SK-N-SH (cell line): ENCODE measurements at regions of chr1 and their contacts with region 1.

Region 1: GRCh38 chr1:203486618-203487370 is 7.2 kb upstream of the OPTC start:
- DNase-seq: no peak
- H3K4me3 ChIP-seq: no peak overlapping the region; a peak in 1 of 4 replicates
- H3K27ac ChIP-seq: peak overlapping the region in 1 of 2 experiments; percentile 83; a peak in 2 of 4 replicates
- H3K4me1 ChIP-seq: peaks cover 0 to 11% of the 10 kb centered on the region in 2 experiments; a peak in 1 of 4 replicates
- H3K27me3 ChIP-seq: no peaks in the 10 kb centered on the region
- CTCF ChIP-seq: no peak
- EP300 ChIP-seq: no peak
- RAD21 ChIP-seq: no peak

Region 2: DNA sequence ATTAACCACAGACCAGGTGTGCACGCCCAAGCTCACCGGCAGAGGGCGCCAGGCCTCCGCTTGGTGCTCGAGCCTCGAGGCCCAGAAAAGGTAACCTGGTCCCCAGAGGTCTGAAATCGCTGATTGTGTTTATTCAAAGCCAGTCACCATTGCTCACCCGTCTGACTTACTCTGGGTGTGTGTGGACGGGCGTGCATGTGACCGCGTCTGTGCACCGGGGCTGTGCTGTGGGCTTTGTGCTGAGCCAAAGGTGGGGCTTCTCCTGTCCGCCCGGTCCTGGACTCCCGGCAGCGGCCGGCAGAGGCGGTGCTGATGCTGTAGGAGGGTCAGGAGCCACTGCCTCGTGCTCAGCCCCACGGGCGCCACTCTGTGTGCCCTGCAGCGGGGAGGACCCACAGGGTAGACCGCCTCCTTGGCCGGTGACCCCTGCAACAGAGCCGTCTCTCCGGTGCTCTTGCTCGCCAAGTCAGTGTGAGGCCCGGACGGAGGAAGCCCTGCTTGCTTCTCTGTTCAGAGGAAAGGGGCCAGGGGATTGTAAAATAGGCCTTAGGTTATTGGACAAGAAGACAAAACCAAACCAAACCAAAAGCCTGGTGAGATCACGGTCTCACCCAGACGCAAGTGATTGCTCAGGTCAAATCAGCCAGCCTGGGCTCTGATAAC is 213.5 kb before region 1 on chr1:
- CTCF ChIA-PET with region 1: interaction called, 34 read pairs
- POLR2A ChIA-PET with region 1: no interaction called
- DNase-seq: peak; percentile 86
- H3K4me3 ChIP-seq: peak overlapping the region in 1 of 2 experiments; percentile 31; a peak in 1 of 4 replicates
- H3K27ac ChIP-seq: no peak overlapping the region
- H3K4me1 ChIP-seq: peaks cover 0 to 28% of the 10 kb centered on the region in 2 experiments; a peak in 1 of 4 replicates
- H3K27me3 ChIP-seq: no peaks in the 10 kb centered on the region
- CTCF ChIP-seq: peak; percentile 98
- EP300 ChIP-seq: no peak
- RAD21 ChIP-seq: peak; percentile 93

Region 3: GRCh38 chr1:203440771-203441170 is 46.0 kb before region 1 on chr1:
- CTCF ChIA-PET with region 1: interaction called, 17 read pairs
- POLR2A ChIA-PET with region 1: no interaction called
- DNase-seq: peak; percentile 61
- H3K4me3 ChIP-seq: no peak overlapping the region
- H3K27ac ChIP-seq: no peak overlapping the region
- H3K4me1 ChIP-seq: peaks cover 6 to 14% of the 10 kb centered on the region in 2 experiments; a peak in 2 of 4 replicates
- H3K27me3 ChIP-seq: no peaks in the 10 kb centered on the region
- CTCF ChIP-seq: peak; percentile 68
- EP300 ChIP-seq: no peak
- RAD21 ChIP-seq: peak; percentile 82

Region 4: GRCh38 chr1:203475012-203475981 is 11.5 kb before region 1 on chr1 and contains the start of gene PRELP:
- CTCF ChIA-PET with region 1: interaction called, 19 read pairs
- POLR2A ChIA-PET with region 1: interaction called, 3 read pairs
- DNase-seq: peak; percentile 67
- H3K4me3 ChIP-seq: no peak within 1 kb of the TSS
- H3K27ac ChIP-seq: no peak within 1 kb of the TSS
- H3K4me1 ChIP-seq: peaks cover 7 to 8% of the 10 kb centered on the region in 2 experiments; a peak in 2 of 4 replicates
- H3K27me3 ChIP-seq: no peaks in the 10 kb centered on the region
- CTCF ChIP-seq: no peak
- EP300 ChIP-seq: no peak
- RAD21 ChIP-seq: no peak
- polyA plus RNA-seq, gene PRELP: 0.26 and 0.48 TPM in 2 replicates

Region 5: GRCh38 chr1:203504397-203505250 is 17.8 kb after region 1 on chr1:
- CTCF ChIA-PET with region 1: interaction called, 23 read pairs
- POLR2A ChIA-PET with region 1: no interaction called
- DNase-seq: peak; percentile 86
- H3K4me3 ChIP-seq: no peak overlapping the region; a peak in 1 of 4 replicates
- H3K27ac ChIP-seq: peak overlapping the region in 1 of 2 experiments; percentile 37; a peak in 1 of 4 replicates
- H3K4me1 ChIP-seq: peaks cover 25 to 30% of the 10 kb centered on the region in 2 experiments
- H3K27me3 ChIP-seq: no peaks in the 10 kb centered on the region
- CTCF ChIP-seq: peak; percentile 87
- EP300 ChIP-seq: no peak
- RAD21 ChIP-seq: peak; percentile 92

Region 6: DNA sequence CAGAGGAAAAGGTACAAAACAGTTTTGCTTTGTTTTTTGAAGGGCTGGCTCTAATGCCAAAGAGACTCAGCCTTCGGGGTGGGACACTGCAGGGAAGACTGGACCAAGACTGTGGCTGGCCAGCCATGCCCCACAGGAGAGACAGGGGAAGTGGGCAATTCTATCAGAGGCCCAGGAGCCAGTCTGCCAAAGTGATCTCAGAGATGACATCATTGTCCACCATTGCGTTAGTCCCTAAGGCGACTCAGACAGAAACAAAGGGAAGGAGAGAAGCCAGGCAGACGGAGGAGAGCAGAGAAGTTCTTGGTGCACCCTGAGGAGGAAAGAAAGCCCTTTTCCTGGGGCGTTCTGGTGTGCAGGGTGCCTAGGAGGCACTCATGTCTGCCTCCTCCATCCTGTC is 33.5 kb after region 1 on chr1:
- CTCF ChIA-PET with region 1: no interaction called
- POLR2A ChIA-PET with region 1: no interaction called
- DNase-seq: no peak
- H3K4me3 ChIP-seq: no peak overlapping the region
- H3K27ac ChIP-seq: peak overlapping the region; percentile 16 to 64; a peak in 3 of 4 replicates
- H3K4me1 ChIP-seq: peaks cover 33 to 37% of the 10 kb centered on the region in 2 experiments
- H3K27me3 ChIP-seq: no peaks in the 10 kb centered on the region
- CTCF ChIP-seq: no peak
- EP300 ChIP-seq: no peak
- RAD21 ChIP-seq: no peak